ENCODE measurements at regions of chr1 and their contacts with region 1.

Region 1: DNA sequence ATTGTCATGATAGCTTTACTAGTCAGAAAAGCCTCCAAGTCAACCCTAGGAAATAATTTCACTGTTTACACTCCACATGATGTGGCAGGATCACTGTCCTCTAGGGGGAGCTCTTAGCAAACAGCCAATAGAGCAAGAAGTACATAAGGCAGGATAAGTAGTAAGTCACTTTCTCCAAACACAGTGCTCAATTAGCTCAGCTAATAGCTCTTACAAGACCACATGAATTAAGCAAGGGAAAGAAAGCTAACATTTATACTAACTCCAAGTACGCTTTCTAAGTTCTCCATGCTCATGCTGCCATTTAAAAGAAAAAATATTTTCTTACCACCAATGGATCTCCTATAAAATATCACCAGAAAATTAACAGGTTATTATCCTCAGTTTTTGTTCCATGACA is 66.9 kb upstream of the LRIF1 start:
- DNase-seq: peak; percentile 44 to 83 (median 53)
- ATAC-seq: peak; percentile 95
- H3K4me3 ChIP-seq: no peak overlapping the region
- H3K27ac ChIP-seq: no peak overlapping the region
- H3K4me1 ChIP-seq: peaks cover 0 to under 1% of the 10 kb centered on the region in 2 experiments; a peak in 1 of 5 replicates
- H3K27me3 ChIP-seq: no peaks in the 10 kb centered on the region
- CTCF ChIP-seq: peak; percentile 86 to 93 (median 87)
- EP300 ChIP-seq: no peak
- POLR2A ChIP-seq: no peak
- RAD21 ChIP-seq: peak; percentile 59 to 89

Region 2: DNA sequence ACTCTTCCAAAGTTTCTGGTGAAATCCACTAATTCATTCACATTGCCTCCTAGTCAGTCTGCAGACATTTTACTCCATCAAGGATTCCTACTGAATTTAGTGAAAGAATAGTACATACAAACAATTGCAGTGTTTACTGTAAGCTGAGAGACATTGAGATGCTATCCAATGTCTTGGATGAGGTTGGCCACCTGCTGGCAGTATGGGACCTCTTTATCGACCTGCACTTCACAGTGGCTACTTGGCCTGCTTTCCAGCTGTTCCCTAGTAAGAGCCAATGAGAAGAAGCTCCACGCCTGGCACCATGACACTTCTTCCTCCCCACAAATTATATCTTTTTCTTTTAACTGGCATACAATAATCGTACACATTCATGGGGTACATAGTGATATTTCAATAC is 15.4 kb before region 1 on chr1:
- CTCF ChIA-PET with region 1: no interaction called
- POLR2A ChIA-PET with region 1: interaction called, 10 read pairs
- in situ Hi-C with region 1: no loop called
- intact Hi-C with region 1: no loop called
- DNase-seq: peak in 2 of 4 experiments; percentile 19 to 22
- ATAC-seq: peak; percentile 71
- H3K4me3 ChIP-seq: no peak overlapping the region
- H3K27ac ChIP-seq: no peak overlapping the region
- H3K4me1 ChIP-seq: no peaks in the 10 kb centered on the region
- H3K27me3 ChIP-seq: peaks cover 0 to 7% of the 10 kb centered on the region in 2 experiments; a peak in 1 of 5 replicates
- CTCF ChIP-seq: peak; percentile 28 to 52 (median 38); a peak in 4 of 6 replicates
- EP300 ChIP-seq: no peak
- POLR2A ChIP-seq: no peak
- RAD21 ChIP-seq: peak in 1 of 2 experiments; percentile 62; a peak in 2 of 4 replicates

Region 3: DNA sequence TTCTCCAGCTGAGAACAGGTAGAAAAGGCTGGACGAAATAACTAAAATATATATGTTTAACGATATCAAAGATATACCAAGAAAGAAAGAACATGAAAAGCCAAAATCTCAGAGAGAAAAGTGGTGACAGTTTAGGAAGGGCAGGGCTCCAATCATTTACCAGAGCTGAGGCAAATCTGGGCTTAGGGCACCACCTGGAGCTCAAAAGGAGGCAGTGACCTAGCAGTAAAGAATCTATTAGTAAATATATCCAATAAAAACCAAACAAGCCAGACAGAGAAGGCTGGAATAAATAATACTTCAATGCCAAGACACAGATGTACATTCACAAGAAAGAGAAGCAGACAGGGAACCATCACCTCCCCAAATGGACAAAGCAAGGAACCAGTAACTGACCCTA is 303.6 kb after region 1 on chr1:
- CTCF ChIA-PET with region 1: no interaction called
- POLR2A ChIA-PET with region 1: no interaction called
- in situ Hi-C with region 1: no loop called
- intact Hi-C with region 1: loop called (anchors 10 kb)
- DNase-seq: peak; percentile 22 to 38 (median 26)
- ATAC-seq: peak; percentile 62; the same call in 2 of the 3 replicates
- H3K4me3 ChIP-seq: no peak overlapping the region
- H3K27ac ChIP-seq: no peak overlapping the region
- H3K4me1 ChIP-seq: no peaks in the 10 kb centered on the region
- H3K27me3 ChIP-seq: no peaks in the 10 kb centered on the region
- CTCF ChIP-seq: peak; percentile 50 to 61 (median 51)
- EP300 ChIP-seq: no peak
- POLR2A ChIP-seq: no peak
- RAD21 ChIP-seq: peak; percentile 42 to 78; a peak in 3 of 4 replicates

Region 4: DNA sequence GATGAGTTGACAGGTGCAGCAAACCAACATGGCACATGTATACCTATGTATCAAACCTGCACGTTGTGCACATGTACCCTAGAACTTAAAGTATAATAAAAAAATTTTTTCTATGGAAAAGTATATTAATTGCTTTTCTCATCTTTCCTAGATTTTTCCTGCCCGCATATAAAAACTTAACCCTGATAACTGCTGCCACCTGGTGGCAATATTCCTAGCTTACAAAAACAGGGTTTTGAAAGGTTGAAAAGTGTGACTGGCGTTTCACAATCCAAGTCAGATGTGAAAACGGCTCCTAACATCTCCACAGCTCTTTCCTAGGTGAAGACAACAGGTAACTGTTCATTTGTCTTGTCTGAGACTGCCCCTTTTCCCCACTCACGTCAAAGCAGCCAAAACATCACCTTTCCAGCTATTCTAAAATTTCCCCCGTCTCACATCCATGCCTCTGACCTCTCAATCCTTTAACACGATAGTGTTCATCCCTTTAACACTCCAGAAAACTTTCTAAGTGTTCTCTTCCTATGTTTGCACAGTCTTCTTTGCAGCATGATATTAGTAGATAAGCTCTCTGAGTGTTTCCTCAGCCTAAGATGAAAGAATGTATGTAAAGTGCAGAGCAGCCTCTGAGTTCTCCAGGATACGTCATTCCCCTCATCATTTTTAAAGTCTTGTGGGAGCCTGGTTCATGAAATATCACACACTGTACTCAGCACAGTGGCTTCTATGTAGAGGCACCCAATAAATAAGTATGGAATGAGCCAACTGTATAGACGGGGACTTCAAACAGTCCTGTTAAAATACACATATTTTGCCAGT is 369.4 kb after region 1 on chr1:
- CTCF ChIA-PET with region 1: interaction called, 11 read pairs
- POLR2A ChIA-PET with region 1: no interaction called
- in situ Hi-C with region 1: no loop called
- intact Hi-C with region 1: loop called (anchors 2 kb)
- DNase-seq: peak; percentile 41 to 67 (median 50)
- ATAC-seq: peak; percentile 69; the same call in 2 of the 3 replicates
- H3K4me3 ChIP-seq: no peak overlapping the region
- H3K27ac ChIP-seq: no peak overlapping the region
- H3K4me1 ChIP-seq: no peaks in the 10 kb centered on the region
- H3K27me3 ChIP-seq: peaks cover 24 to 31% of the 10 kb centered on the region in 2 experiments
- CTCF ChIP-seq: peak; percentile 60 to 84 (median 62); a peak in 5 of 6 replicates
- EP300 ChIP-seq: no peak
- POLR2A ChIP-seq: no peak
- RAD21 ChIP-seq: peak; percentile 87 to 90